ENCODE measurements at regions of chr17 and their contacts with region 1.

Region 1: DNA sequence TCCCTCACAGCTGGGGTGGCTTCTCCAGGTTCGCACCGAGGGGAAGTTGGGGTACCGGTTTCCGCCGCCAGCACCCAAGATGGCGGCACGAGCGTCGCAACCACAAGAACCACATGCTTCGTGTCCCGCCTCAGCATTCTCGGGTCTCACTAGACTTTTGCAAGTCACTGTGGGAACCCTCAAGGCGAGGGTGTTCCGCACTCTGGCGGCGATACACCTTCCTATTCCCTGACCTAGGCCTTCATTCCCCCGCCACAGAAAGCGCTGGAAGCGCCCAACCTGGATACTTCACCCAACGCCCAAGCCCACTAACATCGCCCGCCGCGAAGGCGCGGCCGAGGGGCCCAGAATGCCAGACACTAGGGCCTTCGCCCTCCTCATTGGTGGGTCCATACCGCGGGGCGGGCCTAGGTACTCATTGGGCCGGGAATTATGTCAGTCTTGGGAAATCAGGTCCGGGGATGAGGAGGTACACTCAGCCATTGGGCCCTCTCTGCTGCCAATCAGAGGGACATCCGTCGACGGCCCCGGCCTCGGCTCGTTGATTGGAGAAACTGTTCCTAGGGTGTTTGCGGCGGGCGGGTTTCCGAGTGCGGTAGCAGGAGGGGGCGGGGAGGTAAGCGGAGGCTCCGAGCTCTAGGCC is at the start of gene NFE2L1:
- H3K4me3 ChIP-seq: peak within 1 kb of the TSS; percentile 83
- H3K27ac ChIP-seq: peak within 1 kb of the TSS; percentile 97
- H3K4me1 ChIP-seq: peaks cover 36% of the 10 kb centered on the region
- CTCF ChIP-seq: peak; percentile 30; the same call in 1 of the 2 replicates

Region 2: GRCh38 chr17:47941236-47941994 is 106.4 kb before region 1 on chr17 and contains the start of gene PNPO:
- CTCF ChIA-PET with region 1: interaction called, 4 read pairs
- POLR2A ChIA-PET with region 1: interaction called, 14 read pairs
- H3K4me3 ChIP-seq: peak within 1 kb of the TSS; percentile 79
- H3K27ac ChIP-seq: peak within 1 kb of the TSS; percentile 61; the same call in 1 of the 2 replicates
- H3K4me1 ChIP-seq: no peaks in the 10 kb centered on the region
- CTCF ChIP-seq: peak; percentile 64; the same call in 1 of the 2 replicates

Region 3: DNA sequence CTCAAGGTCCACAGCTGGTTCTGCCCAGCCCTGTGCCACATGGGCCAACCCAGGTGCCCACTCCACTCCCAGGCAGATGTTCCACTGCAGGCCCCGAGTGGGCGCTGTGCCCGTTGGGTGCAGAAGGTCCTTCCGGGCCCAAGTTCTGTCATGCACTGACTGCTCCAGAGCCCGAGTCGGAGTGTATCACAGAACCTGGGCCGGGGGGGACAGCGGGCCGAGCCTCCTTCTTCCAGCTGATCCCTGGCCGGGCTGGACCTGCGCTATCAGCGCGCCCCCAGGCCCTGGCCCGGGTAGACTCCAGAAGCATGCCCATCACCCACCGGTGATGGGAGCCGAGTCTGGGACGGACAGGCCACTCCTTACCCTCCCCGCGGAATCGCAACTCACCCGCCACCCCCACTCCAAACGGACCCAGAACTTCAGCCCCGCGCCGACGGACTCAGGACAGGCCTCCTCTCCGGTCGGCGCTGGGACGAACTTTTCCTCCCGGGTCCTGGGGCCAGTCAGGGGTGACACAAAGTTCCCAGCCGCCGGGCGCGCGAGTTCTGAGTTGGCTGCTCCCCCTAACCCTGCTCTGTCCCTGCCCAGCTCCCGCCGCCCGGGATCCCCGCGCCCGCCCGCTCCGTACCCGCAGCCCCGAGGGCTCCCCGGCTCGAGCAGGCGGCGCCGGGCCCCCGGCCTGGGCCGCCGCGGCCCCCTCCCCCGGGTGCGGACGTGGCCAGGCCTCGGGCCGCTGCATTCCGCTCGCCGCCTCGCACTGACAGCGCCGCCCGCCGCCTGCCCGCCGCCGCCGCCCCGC is 10.6 kb before region 1 on chr17 and contains the start of gene COPZ2:
- CTCF ChIA-PET with region 1: interaction called, 7 read pairs
- POLR2A ChIA-PET with region 1: interaction called, 14 read pairs
- H3K4me3 ChIP-seq: no peak within 1 kb of the TSS
- H3K27ac ChIP-seq: no peak within 1 kb of the TSS
- H3K4me1 ChIP-seq: no peaks in the 10 kb centered on the region
- CTCF ChIP-seq: no peak

Region 4: DNA sequence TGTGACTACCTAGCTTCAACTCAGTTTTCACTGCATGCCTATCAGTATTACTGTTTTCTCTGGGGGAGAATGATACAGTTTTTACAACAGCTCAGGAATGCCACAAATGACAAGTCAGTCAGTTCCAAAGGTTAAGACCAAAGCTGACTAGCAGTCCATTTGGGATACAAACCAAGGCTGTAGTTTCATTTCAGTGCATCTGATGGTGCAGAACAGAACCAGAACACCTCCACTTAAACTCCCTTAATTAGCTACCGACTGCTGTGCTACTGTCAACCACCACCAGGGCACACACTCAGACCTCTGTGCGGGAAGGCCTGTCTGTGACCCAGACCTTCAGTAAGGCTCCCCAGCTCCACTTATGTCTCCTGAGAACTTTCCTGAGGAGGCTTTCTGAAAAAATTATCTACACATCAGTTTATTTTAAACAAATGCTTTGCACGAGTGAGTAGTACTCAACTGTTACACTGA is 20.7 kb after region 1 on chr17:
- CTCF ChIA-PET with region 1: interaction called, 17 read pairs
- POLR2A ChIA-PET with region 1: interaction called, 10 read pairs
- H3K4me3 ChIP-seq: no peak overlapping the region
- H3K27ac ChIP-seq: 0 out of 2 replicates have a peak overlapping the region, but pooled peaks have one; percentile 26
- H3K4me1 ChIP-seq: no peaks in the 10 kb centered on the region
- CTCF ChIP-seq: no peak

Region 5: DNA sequence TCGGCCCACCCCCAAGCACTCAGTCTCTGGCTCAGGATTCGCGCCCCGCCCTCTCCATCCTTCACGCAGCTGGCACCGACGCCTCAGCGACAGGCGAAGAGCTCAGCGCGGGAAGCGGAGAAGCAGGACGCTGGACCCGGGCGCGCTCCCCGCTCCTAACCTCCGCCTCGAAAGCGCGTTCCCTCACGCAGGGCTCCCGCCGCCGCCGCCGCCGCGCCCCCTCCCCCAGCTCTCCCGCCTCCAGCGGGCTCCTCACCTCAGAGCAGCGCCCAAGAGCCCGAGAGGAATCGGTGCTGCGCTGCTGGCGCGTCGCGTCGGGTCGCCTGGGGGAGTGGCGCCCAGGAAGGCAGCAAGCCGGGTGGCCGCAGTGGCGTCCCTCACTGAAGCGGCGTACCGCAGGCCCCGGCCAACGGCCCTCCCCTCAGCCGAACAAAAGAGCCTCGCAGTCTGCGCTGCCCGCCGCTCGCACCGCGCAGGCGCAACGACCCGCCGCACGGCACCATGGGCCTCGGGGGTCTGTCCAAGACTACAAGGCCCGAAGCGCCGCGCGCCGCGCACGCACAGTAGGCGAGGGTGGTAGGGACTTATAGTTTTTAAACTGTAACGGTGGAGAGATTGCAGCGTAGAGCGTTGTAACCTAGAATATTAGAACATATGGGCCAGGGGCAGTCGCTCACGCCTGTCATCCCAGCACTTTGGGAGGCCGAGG is 53.3 kb after region 1 on chr17 and contains the start of gene CBX1:
- CTCF ChIA-PET with region 1: interaction called, 4 read pairs
- POLR2A ChIA-PET with region 1: interaction called, 20 read pairs
- H3K4me3 ChIP-seq: peak within 1 kb of the TSS; percentile 85
- H3K27ac ChIP-seq: peak within 1 kb of the TSS; percentile 97
- H3K4me1 ChIP-seq: peaks cover 4% of the 10 kb centered on the region; the same call in 1 of the 2 replicates
- CTCF ChIP-seq: no peak

Region 6: GRCh38 chr17:48625495-48626244 is 577.8 kb after region 1 on chr17:
- CTCF ChIA-PET with region 1: interaction called, 4 read pairs
- POLR2A ChIA-PET with region 1: interaction called, 10 read pairs
- H3K4me3 ChIP-seq: peak overlapping the region; percentile 78
- H3K27ac ChIP-seq: peak overlapping the region; percentile 100
- H3K4me1 ChIP-seq: peaks cover 21% of the 10 kb centered on the region
- CTCF ChIP-seq: no peak

Region 7: DNA sequence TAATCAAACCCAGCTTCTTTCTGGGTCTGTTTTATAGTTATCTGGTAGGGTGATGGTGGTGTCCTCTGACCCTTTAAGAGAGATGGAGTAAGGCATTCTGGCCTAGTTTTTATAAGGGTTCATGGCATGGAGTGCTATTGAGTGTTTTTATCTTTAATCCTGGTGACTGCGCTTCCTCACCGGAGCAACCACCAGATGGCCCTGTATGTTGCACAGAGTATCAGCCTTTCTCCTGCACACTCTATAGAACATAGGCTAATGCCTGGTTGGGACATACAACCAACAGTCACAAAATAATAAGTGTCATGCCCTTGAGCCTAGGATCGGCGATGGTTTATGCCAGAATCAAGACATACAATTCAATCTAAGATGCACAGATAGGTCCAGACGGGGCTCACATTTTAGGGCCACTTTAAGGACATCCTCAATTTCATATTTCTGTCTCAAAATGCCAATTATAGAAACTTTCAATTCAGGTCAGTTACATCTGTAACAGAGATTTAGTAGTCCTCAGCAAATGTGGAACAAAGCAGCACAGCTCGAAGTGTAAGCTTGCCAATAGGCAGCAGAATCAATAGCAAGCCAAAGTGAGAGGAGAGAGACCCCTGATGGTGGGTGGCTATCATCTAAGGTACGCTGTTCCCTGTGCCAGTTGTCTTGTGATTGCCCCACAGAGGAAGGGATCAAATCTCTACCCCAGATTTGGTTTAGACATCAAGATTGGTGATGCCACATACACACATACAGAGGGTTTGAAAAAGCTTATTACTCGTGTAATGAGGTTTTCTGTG is 615.5 kb after region 1 on chr17:
- CTCF ChIA-PET with region 1: no interaction called
- POLR2A ChIA-PET with region 1: no interaction called
- H3K4me3 ChIP-seq: no peak overlapping the region
- H3K27ac ChIP-seq: no peak overlapping the region
- H3K4me1 ChIP-seq: no peaks in the 10 kb centered on the region
- CTCF ChIP-seq: no peak

Measured in HEK293 (cell line).